ENCODE measurements at regions of chr4 and their contacts with region 1.

Region 1: GRCh38 chr4:138875891-138876613 is 139.5 kb upstream of the NOCT start:
- DNase-seq: no peak
- H3K4me3 Mint-ChIP-seq: no peak overlapping the region
- H3K27ac Mint-ChIP-seq: no peak overlapping the region
- H3K4me1 Mint-ChIP-seq: no peaks in the 10 kb centered on the region
- H3K27me3 Mint-ChIP-seq: peaks cover 17% of the 10 kb centered on the region

Region 2: GRCh38 chr4:138902705-138903104 is 26.7 kb after region 1 on chr4:
- CTCF ChIA-PET with region 1: interaction called, 4 read pairs
- POLR2A ChIA-PET with region 1: no interaction called
- intact Hi-C with region 1: loop called (anchors 1 kb)
- DNase-seq: no peak
- H3K4me3 Mint-ChIP-seq: no peak overlapping the region
- H3K27ac Mint-ChIP-seq: no peak overlapping the region
- H3K4me1 Mint-ChIP-seq: peaks cover 3% of the 10 kb centered on the region
- H3K27me3 Mint-ChIP-seq: peaks cover 2% of the 10 kb centered on the region